GM13976 (cell line): ENCODE measurements at regions of chr16 and their contacts with region 1.

Region 1: GRCh38 chr16:30112197-30113030 is 923 bp downstream of the GDPD3 start:
- DNase-seq: peak; percentile 89
- CTCF ChIP-seq: peak; percentile 76

Region 2: GRCh38 chr16:28958836-28959235 is 1153.6 kb before region 1 on chr16:
- in situ Hi-C with region 1: no loop called
- DNase-seq: no peak
- CTCF ChIP-seq: no peak

Region 3: DNA sequence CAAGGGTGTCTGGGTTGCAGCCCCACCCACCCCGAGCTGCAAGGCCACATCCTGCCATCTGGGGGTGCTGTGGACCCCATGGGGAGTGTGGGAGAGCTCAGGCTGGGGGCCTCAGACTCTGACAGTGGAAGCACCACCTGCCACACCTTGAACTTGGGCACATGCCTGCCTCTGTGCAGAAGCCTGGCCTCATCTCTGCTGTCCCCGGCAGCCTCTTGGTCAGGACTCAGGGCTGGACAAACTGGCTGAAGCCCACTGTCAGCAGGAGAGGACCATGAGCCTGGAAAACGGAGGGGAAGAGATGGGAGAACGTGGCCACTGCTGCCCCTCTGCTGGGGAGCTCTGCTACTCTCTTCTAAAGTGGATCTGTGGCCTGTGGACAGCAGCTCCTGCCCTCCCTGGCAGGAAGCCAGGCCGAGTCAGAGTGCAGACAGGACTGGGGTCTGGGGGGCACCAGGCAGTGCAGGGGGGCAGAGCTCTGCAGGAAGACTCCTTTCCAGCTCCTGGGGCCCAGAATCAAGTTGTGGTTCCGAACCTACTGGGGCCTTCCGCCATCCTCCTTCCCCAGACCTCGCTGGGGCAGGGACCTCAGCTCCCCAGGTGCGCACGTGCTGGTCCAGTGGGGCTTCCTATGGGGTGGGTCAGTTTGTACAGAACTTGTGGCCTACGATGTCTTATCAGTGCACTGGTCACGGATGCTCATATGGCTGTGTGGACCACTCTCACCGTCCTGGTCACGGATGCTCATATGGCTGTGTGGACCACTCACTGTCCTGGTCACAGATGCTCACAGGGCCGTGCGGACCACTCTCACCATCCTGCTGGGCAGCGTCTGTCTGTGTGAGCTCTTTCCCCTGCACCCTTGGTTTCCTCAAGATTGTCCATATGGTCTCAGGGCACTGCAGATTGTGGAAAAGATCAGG is 919.8 kb before region 1 on chr16:
- in situ Hi-C with region 1: no loop called
- DNase-seq: no peak
- CTCF ChIP-seq: no peak

Region 4: DNA sequence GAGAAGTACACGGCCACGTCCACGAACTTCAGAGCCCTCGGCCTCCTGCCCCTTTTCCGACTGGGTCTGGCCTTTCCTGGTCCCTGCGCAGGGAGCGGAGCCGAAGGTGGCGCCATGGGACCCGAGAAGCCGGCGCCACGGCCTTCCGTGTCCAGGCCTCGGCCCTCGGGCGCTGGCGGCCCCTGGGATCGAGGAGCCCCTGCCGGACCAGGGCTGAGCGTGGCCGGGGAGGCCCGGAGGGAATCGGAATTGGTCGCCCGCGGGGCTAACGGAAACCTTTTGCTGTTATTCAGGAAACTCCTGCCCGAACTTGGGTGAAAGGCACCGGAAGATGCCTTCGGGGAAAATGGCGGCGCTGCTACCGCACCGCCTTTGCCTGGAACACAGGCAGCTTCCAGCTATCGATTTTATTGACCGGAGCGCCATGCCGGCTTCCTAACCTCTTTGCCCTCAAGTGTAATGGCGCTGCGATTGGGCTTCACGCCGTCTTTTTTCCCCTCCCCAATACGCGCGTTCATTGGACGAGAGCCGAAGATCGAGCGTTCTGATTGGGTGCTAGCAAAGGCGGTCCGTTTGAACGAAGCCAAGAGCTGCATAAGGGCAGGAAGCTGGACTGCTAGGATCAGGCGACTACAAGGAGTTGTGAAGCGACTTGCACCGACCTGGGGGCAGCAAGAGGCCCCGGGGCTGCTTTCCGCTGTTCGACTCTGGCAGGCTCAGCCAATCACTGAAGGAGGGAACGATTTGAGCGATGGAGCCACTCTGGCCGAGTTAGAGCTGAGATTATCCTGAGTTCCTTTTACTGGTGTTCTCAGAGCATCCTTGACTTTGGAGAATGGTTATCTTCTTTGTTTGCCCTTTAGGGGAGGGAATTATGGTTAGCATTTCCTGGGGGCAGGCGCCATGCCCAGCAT is 497.8 kb after region 1 on chr16 and contains the start of gene ZNF689:
- in situ Hi-C with region 1: loop called (anchors 25 kb)
- DNase-seq: peak; percentile 97
- CTCF ChIP-seq: no peak